ENCODE measurements at regions of chr20 and their contacts with region 1.

Region 1: GRCh38 chr20:58584881-58585752 is 66.0 kb upstream of the STX16 start:
- DNase-seq: no peak

Region 2: DNA sequence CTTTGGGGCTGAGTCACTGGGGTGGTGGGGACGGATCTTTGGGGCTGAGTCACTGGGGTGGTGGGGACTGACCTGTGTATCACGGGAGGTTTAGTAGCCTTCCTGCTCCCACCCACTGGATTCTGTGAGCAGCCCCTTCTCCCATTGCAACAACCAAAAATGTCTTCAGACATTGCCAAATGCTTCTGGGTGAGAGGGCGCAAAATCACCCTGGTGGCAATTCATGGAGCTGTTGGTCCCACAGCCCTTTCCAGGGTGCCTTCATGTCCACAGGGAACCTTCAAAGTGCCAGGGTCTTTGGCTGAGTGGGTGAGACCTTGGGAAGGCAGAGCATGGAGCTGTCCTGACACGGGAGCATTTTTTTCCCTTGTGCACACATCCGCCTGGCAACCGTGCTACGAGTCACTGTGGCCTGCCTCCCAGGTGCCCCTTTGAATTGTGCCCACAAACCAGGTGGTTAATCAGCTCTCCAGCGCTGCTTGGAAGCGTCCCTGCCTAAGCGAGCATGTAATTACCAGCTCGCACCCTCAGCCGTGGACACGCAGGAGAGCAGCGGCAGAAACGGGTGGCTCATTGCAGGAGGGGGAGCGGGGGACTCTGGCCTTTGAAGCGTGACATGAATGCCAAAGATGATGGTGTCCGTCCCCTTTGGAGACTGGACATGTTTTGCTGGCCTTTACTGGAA is 42.6 kb before region 1 on chr20:
- intact Hi-C with region 1: loop called in 1 of 2 experiments (anchors 5 kb)
- DNase-seq: no peak